ENCODE measurements at regions of chr4 and their contacts with region 1.

Region 1: DNA sequence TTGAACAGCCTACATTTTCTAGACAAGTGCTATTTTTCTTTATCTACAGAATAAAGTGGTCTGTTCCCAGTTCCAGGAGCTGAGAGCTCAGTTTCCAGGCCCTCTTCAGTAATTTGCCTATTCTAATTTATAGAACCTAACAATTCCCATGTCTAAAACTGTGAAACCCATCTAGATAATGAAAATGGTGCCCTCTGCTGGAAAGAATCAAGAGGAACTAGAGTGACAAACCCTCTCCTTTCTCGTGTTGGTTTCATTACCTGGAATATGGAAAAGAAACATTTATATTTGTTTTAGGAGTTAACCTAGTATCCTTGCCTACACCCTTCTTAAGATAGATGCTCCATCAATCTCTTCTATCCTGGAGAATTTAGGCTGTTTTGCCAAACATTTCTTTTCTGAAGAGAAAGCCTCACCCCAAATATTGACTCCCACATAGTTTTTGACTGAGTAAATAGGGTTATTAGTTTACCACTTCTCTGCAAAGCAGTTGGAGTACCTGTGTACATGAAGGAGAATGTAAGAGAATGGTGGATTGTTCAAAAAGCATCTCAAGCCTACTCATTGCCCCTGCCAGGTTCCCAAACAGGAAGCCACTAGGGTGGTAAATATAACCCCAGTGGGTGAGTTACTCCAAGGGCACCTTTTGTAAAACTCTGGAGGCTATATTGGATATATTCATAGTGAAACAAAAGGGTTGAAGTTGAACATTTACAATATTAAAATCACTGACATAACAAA is 121.6 kb downstream of the RASL11B start:
- DNase-seq: no peak
- ATAC-seq: peak; percentile 68 to 75
- H3K4me3 ChIP-seq: no peak overlapping the region
- H3K27ac ChIP-seq: no peak overlapping the region
- H3K4me1 ChIP-seq: no peaks in the 10 kb centered on the region
- H3K27me3 ChIP-seq: no peaks in the 10 kb centered on the region

Region 2: GRCh38 chr4:52234561-52235440 is 748.9 kb before region 1 on chr4:
- intact Hi-C with region 1: loop called in 1 of 4 experiments (anchors 5 kb)
- DNase-seq: peak in 1 of 3 donors; percentile 40
- ATAC-seq: peak; percentile 80 to 84
- H3K4me3 ChIP-seq: no peak overlapping the region
- H3K27ac ChIP-seq: no peak overlapping the region
- H3K4me1 ChIP-seq: no peaks in the 10 kb centered on the region
- H3K27me3 ChIP-seq: no peaks in the 10 kb centered on the region

Region 3: GRCh38 chr4:52376132-52376704 is 607.5 kb before region 1 on chr4:
- intact Hi-C with region 1: loop called (anchors 2 to 5 kb)
- DNase-seq: no peak
- ATAC-seq: no peak
- H3K4me3 ChIP-seq: no peak overlapping the region
- H3K27ac ChIP-seq: no peak overlapping the region
- H3K4me1 ChIP-seq: no peaks in the 10 kb centered on the region
- H3K27me3 ChIP-seq: no peaks in the 10 kb centered on the region

Region 4: GRCh38 chr4:52545099-52546069 is 438.3 kb before region 1 on chr4:
- intact Hi-C with region 1: loop called in 3 of 4 experiments (anchors 2 to 5 kb)
- DNase-seq: peak; percentile 75 to 92 (median 84)
- ATAC-seq: peak; percentile 87 to 91
- H3K4me3 ChIP-seq: peak overlapping the region; percentile 23
- H3K27ac ChIP-seq: no peak overlapping the region
- H3K4me1 ChIP-seq: no peaks in the 10 kb centered on the region
- H3K27me3 ChIP-seq: no peaks in the 10 kb centered on the region

Region 5: DNA sequence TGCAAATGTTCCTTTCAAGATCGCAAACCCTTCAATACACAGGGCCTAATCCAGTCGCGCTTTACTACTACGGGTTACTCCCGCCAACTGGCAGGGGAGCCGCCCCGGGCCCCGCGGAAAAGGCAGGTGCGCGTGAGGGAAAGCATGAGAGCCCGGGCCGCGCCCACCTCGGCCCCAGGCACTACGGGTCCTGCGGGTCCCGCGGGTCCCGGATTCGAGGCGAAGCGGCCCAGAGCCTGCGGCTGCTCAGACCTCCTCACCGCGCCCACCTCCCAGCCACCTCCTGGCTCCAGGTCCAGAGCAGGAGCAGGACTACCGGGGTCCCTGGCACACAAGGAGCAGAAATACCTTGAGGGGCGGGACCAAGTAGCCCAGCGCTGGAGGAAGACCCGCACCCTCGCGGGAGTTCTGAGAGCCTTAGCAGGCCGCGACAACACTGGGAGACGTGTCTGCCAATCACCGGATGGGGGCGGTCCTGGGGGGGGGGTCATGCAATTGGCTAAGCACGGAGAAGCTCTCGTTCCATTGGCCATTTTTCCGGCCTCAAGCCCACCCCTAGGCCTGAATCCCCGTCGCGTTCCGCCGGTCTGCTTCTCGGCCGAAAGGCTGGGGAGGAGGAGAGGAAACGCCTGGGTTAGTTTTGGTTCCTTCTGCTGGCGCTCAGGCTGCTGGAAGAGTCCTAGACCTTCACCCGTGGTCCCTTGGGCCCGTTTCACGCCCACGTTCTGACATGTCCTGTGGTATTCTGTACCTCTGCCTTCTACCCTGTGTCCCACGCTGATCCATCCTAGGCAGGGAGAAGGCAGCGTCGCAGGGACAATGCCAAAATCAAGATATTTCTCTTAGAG is 261.5 kb before region 1 on chr4:
- intact Hi-C with region 1: loop called in 2 of 4 experiments (anchors 10 kb)
- DNase-seq: peak; percentile 93 to 97 (median 96)
- ATAC-seq: peak; percentile 99 to 100
- H3K4me3 ChIP-seq: peak overlapping the region; percentile 52
- H3K27ac ChIP-seq: peak overlapping the region; percentile 98
- H3K4me1 ChIP-seq: no peaks in the 10 kb centered on the region
- H3K27me3 ChIP-seq: no peaks in the 10 kb centered on the region

Region 6: DNA sequence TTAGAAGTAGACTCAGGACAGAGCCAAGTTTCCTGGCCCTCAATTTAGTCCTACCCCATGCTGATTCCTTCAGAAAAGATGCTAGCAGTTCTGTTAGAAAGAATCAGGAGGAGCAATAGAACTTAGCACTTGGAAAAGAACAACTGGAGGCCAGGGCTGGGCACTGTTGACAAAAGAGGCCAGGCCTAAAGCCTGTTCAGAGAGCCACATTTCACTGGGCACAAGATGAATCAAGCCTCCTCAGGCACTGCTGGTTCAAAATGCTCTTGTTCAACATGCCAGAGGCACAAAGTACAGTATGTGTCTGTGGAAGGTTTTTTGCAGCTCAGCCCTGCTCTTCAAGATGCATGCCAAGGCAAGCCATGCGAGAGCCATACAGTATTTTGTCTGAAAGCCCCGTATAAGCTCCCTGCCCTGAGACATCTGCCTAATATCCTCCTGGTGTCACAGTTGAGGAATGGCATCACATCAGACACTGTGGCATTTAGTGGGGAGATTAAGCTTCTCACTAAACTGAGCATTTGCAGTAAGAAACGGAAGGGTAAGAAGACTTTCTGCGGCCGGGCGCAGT is 67.9 kb before region 1 on chr4:
- intact Hi-C with region 1: loop called in 1 of 4 experiments (anchors 2 kb)
- DNase-seq: no peak
- ATAC-seq: no peak
- H3K4me3 ChIP-seq: no peak overlapping the region
- H3K27ac ChIP-seq: no peak overlapping the region
- H3K4me1 ChIP-seq: peaks cover 3% of the 10 kb centered on the region
- H3K27me3 ChIP-seq: no peaks in the 10 kb centered on the region

Region 7: DNA sequence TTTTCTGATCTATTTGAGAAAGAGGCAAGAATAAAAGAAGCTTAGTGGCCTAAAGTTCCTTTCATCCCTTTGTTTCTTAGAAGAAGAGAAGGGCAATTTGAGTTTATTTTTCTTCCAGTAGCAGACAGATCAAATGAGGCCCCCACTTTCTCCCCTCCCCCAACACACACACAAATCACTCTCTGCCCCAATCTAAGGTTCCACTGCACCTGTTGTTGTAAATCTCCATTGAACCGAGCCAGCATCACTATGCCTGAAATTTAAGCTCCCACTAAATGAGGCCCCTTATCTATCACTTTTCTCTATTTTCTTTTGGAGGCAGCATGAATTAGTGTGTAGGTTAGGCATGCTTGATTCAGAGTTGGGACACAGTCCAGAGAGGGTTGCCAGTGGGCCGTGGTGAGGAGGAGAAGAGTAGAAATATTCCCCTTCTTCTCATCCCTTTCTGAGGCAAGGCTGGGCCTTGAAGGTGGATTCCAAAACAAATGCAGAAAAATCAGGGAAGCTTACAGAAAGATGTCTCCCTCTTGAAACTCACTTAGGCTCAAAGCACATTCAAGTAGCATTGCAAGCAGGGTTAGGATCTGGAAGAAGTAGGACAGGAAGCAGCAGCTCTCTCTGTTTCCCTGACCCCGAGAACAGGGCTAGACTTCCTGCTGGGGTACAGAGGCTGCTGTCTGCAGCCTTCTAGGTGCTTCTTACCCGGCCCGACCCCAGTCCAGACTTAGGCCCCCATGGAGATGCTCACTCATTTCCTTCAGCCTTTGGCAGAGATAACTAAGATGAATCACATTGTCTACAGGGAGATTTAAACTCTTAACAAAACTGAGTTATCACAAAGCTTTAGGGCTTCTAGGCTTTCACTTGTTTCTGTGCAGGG is 50.9 kb before region 1 on chr4:
- intact Hi-C with region 1: no loop called
- DNase-seq: no peak
- ATAC-seq: no peak
- H3K4me3 ChIP-seq: no peak overlapping the region
- H3K27ac ChIP-seq: no peak overlapping the region
- H3K4me1 ChIP-seq: no peaks in the 10 kb centered on the region
- H3K27me3 ChIP-seq: no peaks in the 10 kb centered on the region

Measured in right cardiac atrium (tissue), 5 donors.